B cell (primary cell): ENCODE measurements at regions of chr21 and their contacts with region 1.

Region 1: GRCh38 chr21:35051287-35051818 is 2.3 kb upstream of the RUNX1 start:
- DNase-seq: peak; percentile 83
- ATAC-seq: peak; percentile 37
- H3K4me3 ChIP-seq: peak overlapping the region in 1 of 5 experiments; percentile 27
- H3K4me3 Mint-ChIP-seq: peak overlapping the region; percentile 82
- H3K27ac ChIP-seq: peak overlapping the region; percentile 51 to 69
- H3K27ac Mint-ChIP-seq: peak overlapping the region; percentile 96
- H3K4me1 ChIP-seq: peaks cover 33 to 39% of the 10 kb centered on the region in 2 donors
- H3K4me1 Mint-ChIP-seq: peaks cover 56% of the 10 kb centered on the region
- H3K27me3 ChIP-seq: no peaks in the 10 kb centered on the region
- H3K27me3 Mint-ChIP-seq: no peaks in the 10 kb centered on the region
- CTCF ChIP-seq: peak; percentile 62

Region 2: DNA sequence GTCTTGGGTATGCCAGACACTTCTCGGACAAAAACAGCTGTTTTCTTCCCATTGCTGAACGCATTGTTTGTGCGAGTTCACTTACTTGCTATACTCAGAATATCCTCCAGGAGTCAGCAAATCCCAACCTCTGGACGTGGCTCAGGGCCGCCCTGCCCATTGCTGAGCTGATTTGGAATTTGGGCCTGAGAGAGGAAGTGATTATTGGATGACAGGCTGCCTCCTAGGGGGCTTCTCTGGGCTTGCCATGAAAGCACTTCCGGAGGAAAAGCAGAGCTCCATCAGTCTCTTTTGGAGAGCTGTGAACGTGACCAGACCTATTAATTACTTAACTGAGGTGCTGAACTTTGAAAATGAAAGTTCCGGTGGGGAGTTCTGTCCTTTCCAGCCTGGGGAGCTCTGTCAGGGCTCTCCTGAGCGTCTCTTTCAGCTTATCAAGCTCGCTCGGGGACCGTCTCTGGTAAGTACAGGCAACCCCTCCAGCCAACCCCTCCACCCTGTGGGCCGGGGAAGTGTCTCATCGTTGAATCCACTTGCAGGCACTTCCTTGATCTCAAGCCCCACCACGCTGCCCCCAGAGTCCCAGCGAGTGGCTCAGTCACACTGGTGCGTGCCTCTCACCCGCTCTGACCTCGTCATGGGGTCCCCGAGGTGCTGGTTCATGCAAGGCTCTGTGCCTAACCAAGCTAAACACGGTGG is 305.6 kb before region 1 on chr21:
- CTCF ChIA-PET with region 1: interaction called, 6 read pairs
- POLR2A ChIA-PET with region 1: no interaction called
- intact Hi-C with region 1: loop called (anchors 2 kb)
- DNase-seq: peak; percentile 76
- ATAC-seq: peak; percentile 89
- H3K4me3 ChIP-seq: peak overlapping the region in 3 of 5 experiments; percentile 14 to 41 (median 27)
- H3K4me3 Mint-ChIP-seq: peak overlapping the region; percentile 81
- H3K27ac ChIP-seq: no peak overlapping the region
- H3K27ac Mint-ChIP-seq: no peak overlapping the region
- H3K4me1 ChIP-seq: peaks cover 0 to 8% of the 10 kb centered on the region in 2 donors
- H3K4me1 Mint-ChIP-seq: peaks cover 4% of the 10 kb centered on the region
- H3K27me3 ChIP-seq: no peaks in the 10 kb centered on the region
- H3K27me3 Mint-ChIP-seq: peaks cover 25% of the 10 kb centered on the region
- CTCF ChIP-seq: peak; percentile 85

Region 3: DNA sequence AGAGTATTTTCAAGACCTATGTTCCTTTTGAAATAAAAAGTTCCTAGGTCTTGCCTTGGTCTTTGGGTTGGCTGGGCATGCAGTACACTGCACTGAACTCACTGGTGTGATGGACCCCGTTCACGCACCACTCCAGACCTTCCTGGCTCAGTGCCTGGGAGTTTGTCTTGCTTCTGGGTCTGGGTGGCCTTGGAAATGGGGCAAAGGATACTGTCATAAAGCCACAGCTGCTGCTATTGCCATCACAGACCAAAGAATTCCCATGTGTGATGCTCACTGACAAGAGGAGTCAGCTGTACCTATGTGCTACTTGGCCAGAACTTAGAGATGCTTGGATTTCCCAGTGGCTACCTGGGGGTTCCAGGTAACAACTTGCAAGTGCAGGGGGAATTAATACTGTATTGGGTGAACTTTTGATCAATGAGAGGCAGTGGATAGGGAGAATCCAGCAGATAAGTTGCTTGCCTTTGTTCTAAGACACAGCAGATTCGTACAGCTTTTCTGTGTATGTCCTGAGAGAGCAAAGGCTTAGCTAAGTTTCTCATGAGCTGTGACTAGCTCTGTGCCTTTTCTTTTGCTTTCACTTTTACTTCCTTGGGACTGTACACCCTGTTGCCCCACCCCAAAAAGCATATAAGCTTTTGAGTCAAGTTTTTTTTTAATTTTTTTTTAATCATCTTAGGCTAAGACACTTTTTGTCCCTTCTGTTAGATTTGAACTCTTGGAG is 117.6 kb before region 1 on chr21:
- CTCF ChIA-PET with region 1: interaction called, 13 read pairs
- POLR2A ChIA-PET with region 1: no interaction called
- intact Hi-C with region 1: loop called (anchors 2 kb)
- DNase-seq: peak; percentile 76
- ATAC-seq: peak; percentile 98
- H3K4me3 ChIP-seq: peak overlapping the region; percentile 14 to 63 (median 43)
- H3K4me3 Mint-ChIP-seq: peak overlapping the region; percentile 83
- H3K27ac ChIP-seq: peak overlapping the region; percentile 83 to 92
- H3K27ac Mint-ChIP-seq: peak overlapping the region; percentile 93
- H3K4me1 ChIP-seq: peaks cover 37 to 40% of the 10 kb centered on the region in 2 donors
- H3K4me1 Mint-ChIP-seq: peaks cover 72% of the 10 kb centered on the region
- H3K27me3 ChIP-seq: no peaks in the 10 kb centered on the region
- H3K27me3 Mint-ChIP-seq: no peaks in the 10 kb centered on the region
- CTCF ChIP-seq: no peak

Region 4: GRCh38 chr21:35102488-35103371 is 51.4 kb after region 1 on chr21:
- CTCF ChIA-PET with region 1: interaction called, 3 read pairs
- POLR2A ChIA-PET with region 1: no interaction called
- intact Hi-C with region 1: loop called (anchors 2 kb)
- DNase-seq: peak; percentile 78
- ATAC-seq: peak; percentile 98
- H3K4me3 ChIP-seq: peak overlapping the region in 1 of 5 experiments; percentile 5
- H3K4me3 Mint-ChIP-seq: no peak overlapping the region
- H3K27ac ChIP-seq: peak overlapping the region in 1 of 2 donors; percentile 27
- H3K27ac Mint-ChIP-seq: no peak overlapping the region
- H3K4me1 ChIP-seq: peaks cover 14 to 19% of the 10 kb centered on the region in 2 donors
- H3K4me1 Mint-ChIP-seq: no peaks in the 10 kb centered on the region
- H3K27me3 ChIP-seq: no peaks in the 10 kb centered on the region
- H3K27me3 Mint-ChIP-seq: peaks cover 3% of the 10 kb centered on the region
- CTCF ChIP-seq: no peak

Region 5: GRCh38 chr21:35204850-35205541 is 153.6 kb after region 1 on chr21:
- CTCF ChIA-PET with region 1: interaction called, 11 read pairs
- POLR2A ChIA-PET with region 1: interaction called, 3 read pairs
- intact Hi-C with region 1: loop called (anchors 5 kb)
- DNase-seq: peak; percentile 56
- ATAC-seq: peak; percentile 52
- H3K4me3 ChIP-seq: peak overlapping the region; percentile 9 to 59 (median 45)
- H3K4me3 Mint-ChIP-seq: peak overlapping the region; percentile 81
- H3K27ac ChIP-seq: peak overlapping the region; percentile 22 to 45
- H3K27ac Mint-ChIP-seq: peak overlapping the region; percentile 75
- H3K4me1 ChIP-seq: peaks cover 23 to 29% of the 10 kb centered on the region in 2 donors
- H3K4me1 Mint-ChIP-seq: peaks cover 24% of the 10 kb centered on the region
- H3K27me3 ChIP-seq: no peaks in the 10 kb centered on the region
- H3K27me3 Mint-ChIP-seq: no peaks in the 10 kb centered on the region
- CTCF ChIP-seq: no peak

Region 6: DNA sequence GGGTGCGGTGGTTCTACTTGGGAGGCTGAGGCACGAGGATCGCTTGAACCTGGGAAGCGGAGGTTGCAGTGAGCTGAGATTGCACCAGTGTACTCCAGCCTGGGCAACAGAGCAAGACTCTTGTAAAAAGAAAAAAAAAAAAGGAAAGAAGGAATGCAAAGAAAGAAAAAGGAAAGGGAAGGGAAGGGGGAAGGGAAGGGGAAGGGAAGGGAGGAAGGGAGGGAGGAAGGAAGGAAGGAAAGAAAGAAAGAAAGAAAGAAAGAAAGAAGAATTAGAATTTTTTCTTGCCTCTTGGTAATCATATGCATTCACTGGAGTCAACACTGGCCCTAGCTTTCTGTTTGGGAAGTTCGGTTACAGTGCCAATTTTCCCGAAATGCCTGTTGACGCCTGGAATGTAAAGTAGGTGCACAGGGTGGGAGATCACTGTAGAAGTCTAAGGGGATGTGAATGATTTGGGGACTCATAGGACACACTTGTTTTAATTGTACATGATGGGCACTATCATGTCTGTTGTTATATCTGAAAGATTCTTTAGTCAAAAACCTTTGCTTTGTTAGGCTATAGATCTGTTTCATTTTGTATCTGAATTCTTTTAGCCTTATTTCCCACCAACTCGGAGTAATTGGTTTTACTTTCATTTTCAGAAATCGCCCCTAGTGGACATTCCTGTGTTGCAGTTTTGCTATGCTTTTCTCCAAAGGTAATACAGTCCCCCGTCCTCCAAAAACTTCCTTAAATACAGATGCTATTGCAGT is 1208.9 kb after region 1 on chr21:
- CTCF ChIA-PET with region 1: no interaction called
- POLR2A ChIA-PET with region 1: no interaction called
- intact Hi-C with region 1: loop called (anchors 10 kb)
- DNase-seq: peak; percentile 78
- ATAC-seq: peak; percentile 44
- H3K4me3 ChIP-seq: peak overlapping the region; percentile 21 to 71 (median 34)
- H3K4me3 Mint-ChIP-seq: peak overlapping the region; percentile 86
- H3K27ac ChIP-seq: peak overlapping the region; percentile 68 to 77
- H3K27ac Mint-ChIP-seq: peak overlapping the region; percentile 94
- H3K4me1 ChIP-seq: peaks cover 81 to 90% of the 10 kb centered on the region in 2 donors
- H3K4me1 Mint-ChIP-seq: peaks cover 73% of the 10 kb centered on the region
- H3K27me3 ChIP-seq: no peaks in the 10 kb centered on the region
- H3K27me3 Mint-ChIP-seq: no peaks in the 10 kb centered on the region
- CTCF ChIP-seq: peak; percentile 82